ENCODE measurements at regions of chr14 and their contacts with region 1.

Region 1: GRCh38 chr14:68759937-68760336 is 32.9 kb downstream of the ZFP36L1 start:
- DNase-seq: no peak
- ATAC-seq: no peak
- H3K4me3 ChIP-seq: no peak overlapping the region
- H3K27ac ChIP-seq: no peak overlapping the region
- H3K4me1 ChIP-seq: no peaks in the 10 kb centered on the region
- H3K27me3 ChIP-seq: no peaks in the 10 kb centered on the region
- CTCF ChIP-seq: no peak
- EP300 ChIP-seq: no peak
- POLR2A ChIP-seq: no peak
- RAD21 ChIP-seq: no peak

Region 2: DNA sequence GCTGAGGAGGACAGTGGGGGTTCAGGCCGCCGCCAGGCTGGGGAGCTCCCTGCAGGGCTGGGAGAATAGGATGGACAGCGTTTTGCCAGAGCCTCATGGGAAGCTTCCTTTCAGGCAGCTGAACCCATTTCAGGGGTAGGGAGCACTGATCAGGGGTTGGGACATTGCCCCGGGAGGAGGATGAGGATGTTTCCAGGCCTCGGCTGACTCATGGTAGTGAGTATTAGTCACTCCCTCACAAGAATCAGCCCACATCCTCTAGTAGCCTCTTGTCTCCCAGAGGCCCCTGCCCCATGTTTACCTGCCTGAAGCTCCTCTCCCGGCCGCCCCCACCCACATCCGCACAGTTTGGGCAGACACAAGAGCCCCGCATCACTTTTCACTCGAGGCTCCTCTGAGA is 56.8 kb before region 1 on chr14:
- CTCF ChIA-PET with region 1: no interaction called
- POLR2A ChIA-PET with region 1: no interaction called
- RAD21 ChIA-PET with region 1: no interaction called
- SMC1A ChIA-PET with region 1: no interaction called
- in situ Hi-C with region 1: no loop called
- intact Hi-C with region 1: no loop called
- DNase-seq: no peak
- ATAC-seq: no peak
- H3K4me3 ChIP-seq: no peak overlapping the region
- H3K27ac ChIP-seq: no peak overlapping the region
- H3K4me1 ChIP-seq: no peaks in the 10 kb centered on the region
- H3K27me3 ChIP-seq: no peaks in the 10 kb centered on the region
- CTCF ChIP-seq: no peak
- EP300 ChIP-seq: no peak
- POLR2A ChIP-seq: no peak
- RAD21 ChIP-seq: no peak

Region 3: DNA sequence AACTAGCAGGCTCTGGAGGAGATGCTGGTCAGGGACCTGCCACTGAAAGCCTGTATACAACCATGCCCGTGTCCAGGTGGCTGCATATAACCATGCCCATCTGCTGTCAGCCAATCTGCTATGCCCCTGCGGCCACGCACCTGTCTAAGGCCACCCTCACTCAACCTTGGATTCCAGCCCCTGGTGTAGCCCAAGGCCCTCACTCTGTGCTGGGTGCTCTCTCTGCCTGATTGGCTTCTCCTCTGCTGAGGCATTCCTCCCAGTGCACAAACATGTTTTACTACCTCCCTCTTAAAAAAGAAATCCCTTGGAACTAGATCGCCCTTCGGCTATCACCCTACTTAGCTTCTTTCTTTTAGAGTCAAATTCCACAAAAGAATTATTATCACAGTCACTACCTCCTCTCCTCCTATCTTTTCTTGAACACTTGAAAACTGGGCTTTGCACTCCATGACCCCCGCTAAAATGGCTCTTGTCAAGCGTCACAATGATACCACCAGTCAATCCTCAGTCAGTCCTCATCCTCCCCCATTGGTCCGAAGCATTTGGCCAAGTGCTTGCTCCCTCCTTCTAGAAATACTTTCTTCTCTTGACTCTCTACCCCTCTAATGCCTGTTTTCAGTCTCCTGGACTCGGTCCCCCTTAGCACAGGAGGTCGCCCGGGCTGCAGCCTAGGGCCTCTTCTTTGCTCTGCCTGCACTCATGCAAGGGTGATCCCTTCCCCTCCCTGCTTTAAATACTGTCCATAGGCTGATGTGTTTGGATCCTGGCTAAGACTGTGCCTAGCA is 12.3 kb before region 1 on chr14:
- CTCF ChIA-PET with region 1: no interaction called
- POLR2A ChIA-PET with region 1: interaction called, 10 read pairs
- RAD21 ChIA-PET with region 1: interaction called, 3 read pairs
- SMC1A ChIA-PET with region 1: no interaction called
- in situ Hi-C with region 1: no loop called
- intact Hi-C with region 1: no loop called
- DNase-seq: no peak
- ATAC-seq: no peak
- H3K4me3 ChIP-seq: no peak overlapping the region
- H3K27ac ChIP-seq: no peak overlapping the region
- H3K4me1 ChIP-seq: no peaks in the 10 kb centered on the region
- H3K27me3 ChIP-seq: no peaks in the 10 kb centered on the region
- CTCF ChIP-seq: no peak
- EP300 ChIP-seq: no peak
- POLR2A ChIP-seq: no peak
- RAD21 ChIP-seq: no peak

Measured in GM12878 (cell line).